CD14-positive monocyte (primary cell): ENCODE measurements at regions of chr1 and their contacts with region 1.

Region 1: DNA sequence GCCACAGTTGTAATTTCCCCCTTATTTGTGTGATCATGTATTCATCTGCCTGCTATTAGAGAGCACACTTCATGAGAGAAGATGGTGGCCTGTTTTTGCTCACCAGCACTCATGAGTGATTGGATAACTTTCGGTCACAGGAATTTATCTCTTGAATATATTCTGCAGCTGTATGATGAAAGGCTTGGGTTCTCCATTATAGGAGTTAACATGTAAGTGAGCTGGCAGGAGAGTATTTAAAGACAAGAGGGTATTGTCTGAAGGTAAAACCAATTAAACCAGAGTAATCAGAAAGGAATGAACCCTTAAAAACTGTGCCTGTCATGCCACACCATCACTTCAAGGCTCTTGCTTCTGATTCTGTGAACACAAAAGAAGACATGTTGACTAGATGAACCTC is 574.9 kb upstream of the CAMK1G start:
- DNase-seq: no peak
- H3K4me3 ChIP-seq: no peak overlapping the region
- H3K4me3 Mint-ChIP-seq: no peak overlapping the region
- H3K27ac ChIP-seq: no peak overlapping the region
- H3K27ac Mint-ChIP-seq: no peak overlapping the region
- H3K4me1 ChIP-seq: no peaks in the 10 kb centered on the region
- H3K4me1 Mint-ChIP-seq: no peaks in the 10 kb centered on the region
- H3K27me3 ChIP-seq: no peaks in the 10 kb centered on the region
- H3K27me3 Mint-ChIP-seq: peaks cover 0 to 4% (median 0%) of the 10 kb centered on the region in 3 donors
- CTCF ChIP-seq: no peak

Region 2: DNA sequence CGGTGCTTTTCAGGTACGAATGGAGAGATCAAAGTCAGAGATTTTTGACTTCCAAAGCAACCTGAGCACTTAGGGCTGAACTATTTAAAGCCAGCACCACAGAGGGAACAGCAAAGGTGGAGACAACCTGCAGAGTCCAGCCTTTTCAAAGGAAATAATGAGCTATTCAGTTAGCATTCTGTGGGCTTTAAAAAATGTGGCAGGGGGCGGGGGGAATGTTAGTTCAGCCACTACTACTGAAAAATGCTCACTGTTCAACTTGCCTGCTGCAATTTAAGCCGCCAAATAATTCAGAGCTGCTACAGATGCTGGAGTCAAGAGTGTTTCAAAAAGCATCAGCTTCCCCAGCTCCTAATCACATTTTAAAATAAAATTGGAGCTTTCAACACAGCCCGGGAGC is 291.1 kb before region 1 on chr1:
- intact Hi-C with region 1: no loop called
- DNase-seq: no peak
- H3K4me3 ChIP-seq: no peak overlapping the region
- H3K4me3 Mint-ChIP-seq: no peak overlapping the region
- H3K27ac ChIP-seq: no peak overlapping the region
- H3K27ac Mint-ChIP-seq: peak overlapping the region in 1 of 7 donors; percentile 78
- H3K4me1 ChIP-seq: no peaks in the 10 kb centered on the region
- H3K4me1 Mint-ChIP-seq: no peaks in the 10 kb centered on the region
- H3K27me3 ChIP-seq: no peaks in the 10 kb centered on the region
- H3K27me3 Mint-ChIP-seq: peaks cover 0 to 3% (median 0%) of the 10 kb centered on the region in 3 donors
- CTCF ChIP-seq: no peak

Region 3: GRCh38 chr1:208962867-208963266 is 45.7 kb before region 1 on chr1:
- intact Hi-C with region 1: no loop called
- DNase-seq: no peak
- H3K4me3 ChIP-seq: no peak overlapping the region
- H3K4me3 Mint-ChIP-seq: no peak overlapping the region
- H3K27ac ChIP-seq: no peak overlapping the region
- H3K27ac Mint-ChIP-seq: no peak overlapping the region
- H3K4me1 ChIP-seq: no peaks in the 10 kb centered on the region
- H3K4me1 Mint-ChIP-seq: no peaks in the 10 kb centered on the region
- H3K27me3 ChIP-seq: no peaks in the 10 kb centered on the region
- H3K27me3 Mint-ChIP-seq: peaks cover 0 to 2% (median 1%) of the 10 kb centered on the region in 3 donors
- CTCF ChIP-seq: no peak

Region 4: DNA sequence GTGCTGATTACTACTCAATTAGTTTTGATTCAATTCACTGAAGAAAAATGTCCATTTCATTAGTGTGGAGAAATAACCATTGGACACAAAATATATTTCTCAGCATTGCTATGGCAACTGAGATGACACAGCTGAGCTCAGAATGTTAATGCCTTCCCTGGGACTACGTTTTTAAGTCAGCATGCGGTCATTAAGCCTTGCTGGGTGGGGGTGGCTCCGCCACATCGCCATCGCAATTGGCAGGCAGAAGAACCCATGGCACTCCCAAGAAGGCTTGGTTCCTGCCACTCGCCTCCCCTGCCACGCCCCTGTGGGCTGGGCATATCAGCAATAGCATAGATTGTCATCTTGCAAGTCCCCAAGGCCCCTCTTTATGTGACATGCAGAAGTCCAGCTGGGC is 318.2 kb after region 1 on chr1:
- intact Hi-C with region 1: loop called in 1 of 2 experiments (anchors 10 kb)
- DNase-seq: no peak
- H3K4me3 ChIP-seq: no peak overlapping the region
- H3K4me3 Mint-ChIP-seq: no peak overlapping the region
- H3K27ac ChIP-seq: no peak overlapping the region
- H3K27ac Mint-ChIP-seq: no peak overlapping the region
- H3K4me1 ChIP-seq: no peaks in the 10 kb centered on the region
- H3K4me1 Mint-ChIP-seq: no peaks in the 10 kb centered on the region
- H3K27me3 ChIP-seq: no peaks in the 10 kb centered on the region
- H3K27me3 Mint-ChIP-seq: peaks cover 3 to 5% (median 3%) of the 10 kb centered on the region in 3 donors
- CTCF ChIP-seq: no peak